Mammary epithelial cell (primary cell): ENCODE measurements at regions of chr19 and their contacts with region 1.

Region 1: GRCh38 chr19:21505459-21506451 is at the start of gene ZNF429:
- DNase-seq: peak; percentile 87
- H3K4me3 ChIP-seq: peak within 1 kb of the TSS; percentile 57 to 78 (median 65)
- H3K27ac ChIP-seq: peak within 1 kb of the TSS; percentile 75
- H3K4me1 ChIP-seq: no peaks in the 10 kb centered on the region
- H3K27me3 ChIP-seq: no peaks in the 10 kb centered on the region
- CTCF ChIP-seq: no peak
- total RNA-seq, gene ZNF429: 8.1 to 13.8 TPM

Region 2: DNA sequence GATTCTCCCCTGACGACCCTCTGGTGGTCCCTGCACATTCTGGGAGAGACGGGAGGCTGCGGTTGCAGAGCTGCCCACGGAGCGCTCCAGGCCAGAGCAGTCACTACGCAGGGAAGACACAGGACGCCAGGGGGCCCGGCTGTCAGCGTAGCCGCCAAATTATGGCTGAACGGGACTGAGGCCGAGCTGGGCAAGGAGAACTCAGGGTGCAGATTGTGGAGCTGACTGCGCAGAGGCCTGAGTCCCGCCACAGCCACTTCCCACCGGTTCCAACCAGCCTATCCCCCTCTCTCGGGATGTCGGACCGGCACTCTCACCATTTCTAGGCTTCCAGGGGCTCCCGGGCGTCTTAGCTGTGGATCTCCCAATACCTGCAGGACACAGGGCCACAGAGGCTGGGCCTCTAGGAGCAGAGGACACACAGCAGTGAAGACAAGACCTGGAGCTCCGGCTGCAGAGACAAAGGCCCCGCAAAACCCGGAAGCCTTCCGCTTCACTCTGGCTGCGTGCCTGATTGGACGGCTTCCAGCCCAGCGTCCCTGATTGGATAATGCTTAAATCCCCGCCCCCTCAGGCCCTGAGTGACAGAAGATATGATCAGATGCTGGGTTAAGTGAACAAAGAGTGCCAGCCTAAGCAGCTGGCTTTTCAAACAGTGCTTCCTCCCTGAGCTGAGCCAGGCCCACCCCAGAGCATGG is 940.3 kb before region 1 on chr19 and contains the start of gene ZNF737:
- CTCF ChIA-PET with region 1: no interaction called
- dilution Hi-C with region 1: no loop called
- in situ Hi-C with region 1: no loop called
- intact Hi-C with region 1: loop called (anchors 10 kb)
- DNase-seq: peak; percentile 94
- H3K4me3 ChIP-seq: peak within 1 kb of the TSS; percentile 52 to 88 (median 74)
- H3K27ac ChIP-seq: peak within 1 kb of the TSS; percentile 57
- H3K4me1 ChIP-seq: no peaks in the 10 kb centered on the region
- H3K27me3 ChIP-seq: no peaks in the 10 kb centered on the region
- CTCF ChIP-seq: peak in 1 of 2 donors; percentile 49
- total RNA-seq, gene ZNF737: 6.3 to 16.0 TPM

Region 3: DNA sequence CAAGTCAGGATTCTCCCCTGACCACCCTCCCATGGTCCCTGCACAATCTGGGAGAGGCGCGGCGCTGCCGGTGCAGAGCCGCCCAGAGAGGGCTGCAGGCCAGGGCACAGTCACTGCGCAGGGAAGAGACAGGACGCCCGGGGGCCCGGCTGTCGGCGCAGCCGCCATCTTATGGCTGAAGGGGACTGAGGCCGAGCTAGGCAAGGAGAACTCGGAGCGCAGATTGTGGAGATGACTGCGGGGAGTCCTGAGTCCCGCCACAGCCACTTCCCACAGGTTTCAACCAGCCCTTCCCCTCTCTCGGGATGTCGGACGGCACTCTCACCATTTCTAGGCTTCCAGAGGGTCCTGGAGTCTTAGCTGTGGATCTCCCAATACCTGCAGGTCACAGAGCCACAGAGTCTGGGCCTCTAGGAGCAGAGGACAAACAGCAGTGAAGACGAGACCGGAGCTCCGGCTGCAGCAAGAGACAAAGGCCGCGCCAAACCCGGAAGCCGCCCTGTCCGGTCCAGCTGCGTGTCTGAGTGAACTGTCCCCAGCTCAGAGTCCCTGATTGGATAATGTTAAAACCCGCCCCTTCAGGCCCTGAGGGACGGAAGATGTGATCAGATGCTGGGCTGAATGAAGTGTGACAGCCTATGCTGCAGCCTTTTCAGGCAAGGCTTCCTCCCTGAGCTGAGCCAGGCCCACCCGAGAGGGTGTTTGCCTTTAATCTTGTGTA is 176.7 kb before region 1 on chr19 and contains the start of gene ZNF708:
- CTCF ChIA-PET with region 1: no interaction called
- dilution Hi-C with region 1: no loop called
- in situ Hi-C with region 1: no loop called
- intact Hi-C with region 1: loop called (anchors 10 kb)
- DNase-seq: peak; percentile 90
- H3K4me3 ChIP-seq: peak within 1 kb of the TSS; percentile 62 to 87 (median 81)
- H3K27ac ChIP-seq: peak within 1 kb of the TSS; percentile 86
- H3K4me1 ChIP-seq: peaks cover 5% of the 10 kb centered on the region
- H3K27me3 ChIP-seq: no peaks in the 10 kb centered on the region
- CTCF ChIP-seq: no peak
- total RNA-seq, gene ZNF708: 9.2 to 15.3 TPM

Region 4: DNA sequence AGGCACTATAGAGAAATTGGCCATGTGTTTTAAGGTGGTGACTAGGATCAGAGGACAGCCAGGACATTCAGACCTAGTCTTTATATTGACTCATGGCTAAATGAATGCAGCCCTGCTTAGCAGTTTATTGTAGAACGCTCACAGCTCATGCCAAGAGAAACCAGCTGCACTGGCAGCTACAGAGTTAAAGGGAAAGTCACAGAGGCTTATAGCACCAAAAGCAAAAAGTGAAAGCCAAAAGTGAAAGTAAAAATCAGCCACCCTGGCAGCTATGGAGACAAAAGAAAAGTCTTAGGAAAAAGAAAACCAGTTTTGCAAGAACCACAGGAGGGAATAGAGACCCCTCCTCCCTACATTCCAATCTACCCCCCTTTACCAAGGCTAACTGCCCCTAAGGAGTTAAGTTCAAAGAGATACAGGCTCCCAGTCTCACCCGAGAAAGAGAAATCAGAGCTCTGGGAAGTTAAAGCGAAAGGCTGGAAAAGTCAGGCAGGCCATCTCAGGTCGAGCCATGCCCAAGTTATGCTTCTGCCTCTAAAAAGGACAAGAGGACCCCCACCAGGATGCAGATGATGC is 98.7 kb after region 1 on chr19:
- CTCF ChIA-PET with region 1: no interaction called
- dilution Hi-C with region 1: no loop called
- in situ Hi-C with region 1: no loop called
- intact Hi-C with region 1: loop called (anchors 10 kb)
- DNase-seq: peak; percentile 33
- H3K4me3 ChIP-seq: peak overlapping the region; percentile 17 to 39 (median 35)
- H3K27ac ChIP-seq: no peak overlapping the region
- H3K4me1 ChIP-seq: no peaks in the 10 kb centered on the region
- H3K27me3 ChIP-seq: no peaks in the 10 kb centered on the region
- CTCF ChIP-seq: no peak

Region 5: DNA sequence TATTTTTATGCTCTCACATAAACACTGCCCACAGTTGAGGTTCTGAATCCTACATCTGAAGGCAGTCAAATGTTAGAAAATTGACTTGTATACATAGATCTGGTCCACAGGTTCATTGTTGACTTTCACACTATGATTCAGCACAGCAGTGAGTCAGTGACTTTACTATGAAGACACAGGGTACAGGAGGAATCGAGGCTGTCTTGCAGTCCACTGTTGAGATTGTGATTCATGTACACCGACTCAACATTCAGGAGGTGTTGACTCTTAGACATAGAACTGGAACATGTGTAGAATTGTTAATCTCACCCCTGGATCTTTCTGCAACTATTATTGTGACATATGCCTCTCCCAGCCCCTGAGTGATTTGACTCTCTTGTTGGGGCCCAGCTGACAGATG is 404.6 kb after region 1 on chr19:
- CTCF ChIA-PET with region 1: no interaction called
- dilution Hi-C with region 1: no loop called
- in situ Hi-C with region 1: no loop called
- intact Hi-C with region 1: no loop called
- DNase-seq: peak; percentile 20
- H3K4me3 ChIP-seq: no peak overlapping the region
- H3K27ac ChIP-seq: no peak overlapping the region
- H3K4me1 ChIP-seq: no peaks in the 10 kb centered on the region
- H3K27me3 ChIP-seq: no peaks in the 10 kb centered on the region
- CTCF ChIP-seq: no peak